MCF 10A (cell line): ENCODE measurements at regions of chr19 and their contacts with region 1.

Region 1: DNA sequence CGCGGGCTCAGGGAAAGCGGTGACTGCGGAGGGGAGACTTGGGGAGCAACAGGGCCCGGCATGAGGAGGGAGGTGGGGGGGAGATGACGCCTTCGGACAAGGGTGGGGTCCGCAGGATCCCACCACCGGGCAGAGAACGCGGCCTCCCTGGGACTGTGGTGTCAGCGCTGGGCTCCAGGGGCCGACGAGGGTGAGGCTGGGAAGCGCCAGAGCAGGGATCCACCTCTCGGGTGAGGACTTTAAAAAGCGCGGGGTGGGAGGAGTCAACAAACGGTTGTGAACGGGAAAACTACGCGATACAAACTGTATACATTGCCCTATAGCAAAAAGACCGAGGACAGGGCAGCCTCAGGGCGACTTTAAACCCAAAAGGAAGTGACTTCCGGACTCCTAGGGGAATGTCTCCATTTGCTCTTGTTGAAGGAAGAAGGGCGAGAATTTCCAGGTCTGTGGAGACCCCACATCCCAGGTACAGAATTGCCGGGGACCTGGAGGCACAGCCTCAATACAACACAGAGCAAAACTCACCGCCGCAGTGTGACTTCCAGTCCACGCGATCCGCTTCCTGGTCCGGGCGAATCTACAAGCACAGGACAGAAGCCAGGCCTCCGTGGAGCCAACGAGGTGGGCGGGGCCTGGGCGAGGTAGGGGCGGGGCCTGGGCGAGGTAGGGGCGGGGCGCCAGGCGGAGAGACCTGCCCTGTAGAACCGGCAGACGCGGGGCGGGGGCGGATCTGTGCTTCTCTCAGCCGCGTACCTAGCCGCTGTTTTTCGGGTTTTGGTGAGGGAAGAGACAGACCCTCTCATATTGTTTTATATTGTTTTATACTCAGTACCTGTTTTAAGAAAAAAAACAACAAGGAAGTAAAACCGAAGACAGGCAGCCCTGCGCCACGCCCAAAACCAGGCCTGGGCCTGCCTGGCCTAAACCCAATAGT is at the start of gene ZNF888:
- DNase-seq: peak; percentile 94
- H3K4me3 Mint-ChIP-seq: peak within 1 kb of the TSS; percentile 92
- H3K27ac Mint-ChIP-seq: peak within 1 kb of the TSS; percentile 83
- H3K4me1 Mint-ChIP-seq: peaks cover 37% of the 10 kb centered on the region
- H3K27me3 Mint-ChIP-seq: no peaks in the 10 kb centered on the region
- CTCF ChIP-seq: no peak
- total RNA-seq, gene ZNF888: 7.0 and 7.3 TPM in 2 replicates

Region 2: GRCh38 chr19:52942386-52943133 is 19.5 kb after region 1 on chr19:
- CTCF ChIA-PET with region 1: interaction called, 3 read pairs
- POLR2A ChIA-PET with region 1: interaction called, 10 read pairs
- intact Hi-C with region 1: loop called (anchors 2 kb)
- DNase-seq: peak; percentile 86
- H3K4me3 Mint-ChIP-seq: peak overlapping the region; percentile 80
- H3K27ac Mint-ChIP-seq: peak overlapping the region; percentile 80
- H3K4me1 Mint-ChIP-seq: peaks cover 11% of the 10 kb centered on the region
- H3K27me3 Mint-ChIP-seq: no peaks in the 10 kb centered on the region
- CTCF ChIP-seq: no peak

Region 3: GRCh38 chr19:52962394-52963246 is 39.5 kb after region 1 on chr19 and contains the start of gene ZNF816:
- CTCF ChIA-PET with region 1: no interaction called
- POLR2A ChIA-PET with region 1: interaction called, 22 read pairs
- intact Hi-C with region 1: loop called (anchors 2 kb)
- DNase-seq: peak; percentile 95
- H3K4me3 Mint-ChIP-seq: peak within 1 kb of the TSS; percentile 95
- H3K27ac Mint-ChIP-seq: peak within 1 kb of the TSS; percentile 87
- H3K4me1 Mint-ChIP-seq: no peaks in the 10 kb centered on the region
- H3K27me3 Mint-ChIP-seq: no peaks in the 10 kb centered on the region
- CTCF ChIP-seq: no peak
- total RNA-seq, gene ZNF816: 5.4 and 5.5 TPM in 2 replicates

Region 4: GRCh38 chr19:52991484-52991883 is 68.4 kb after region 1 on chr19:
- CTCF ChIA-PET with region 1: no interaction called
- POLR2A ChIA-PET with region 1: no interaction called
- intact Hi-C with region 1: loop called (anchors 2 kb)
- DNase-seq: peak; percentile 94
- H3K4me3 Mint-ChIP-seq: peak overlapping the region; percentile 14
- H3K27ac Mint-ChIP-seq: peak overlapping the region; percentile 7
- H3K4me1 Mint-ChIP-seq: peaks cover 9% of the 10 kb centered on the region
- H3K27me3 Mint-ChIP-seq: no peaks in the 10 kb centered on the region
- CTCF ChIP-seq: no peak

Region 5: DNA sequence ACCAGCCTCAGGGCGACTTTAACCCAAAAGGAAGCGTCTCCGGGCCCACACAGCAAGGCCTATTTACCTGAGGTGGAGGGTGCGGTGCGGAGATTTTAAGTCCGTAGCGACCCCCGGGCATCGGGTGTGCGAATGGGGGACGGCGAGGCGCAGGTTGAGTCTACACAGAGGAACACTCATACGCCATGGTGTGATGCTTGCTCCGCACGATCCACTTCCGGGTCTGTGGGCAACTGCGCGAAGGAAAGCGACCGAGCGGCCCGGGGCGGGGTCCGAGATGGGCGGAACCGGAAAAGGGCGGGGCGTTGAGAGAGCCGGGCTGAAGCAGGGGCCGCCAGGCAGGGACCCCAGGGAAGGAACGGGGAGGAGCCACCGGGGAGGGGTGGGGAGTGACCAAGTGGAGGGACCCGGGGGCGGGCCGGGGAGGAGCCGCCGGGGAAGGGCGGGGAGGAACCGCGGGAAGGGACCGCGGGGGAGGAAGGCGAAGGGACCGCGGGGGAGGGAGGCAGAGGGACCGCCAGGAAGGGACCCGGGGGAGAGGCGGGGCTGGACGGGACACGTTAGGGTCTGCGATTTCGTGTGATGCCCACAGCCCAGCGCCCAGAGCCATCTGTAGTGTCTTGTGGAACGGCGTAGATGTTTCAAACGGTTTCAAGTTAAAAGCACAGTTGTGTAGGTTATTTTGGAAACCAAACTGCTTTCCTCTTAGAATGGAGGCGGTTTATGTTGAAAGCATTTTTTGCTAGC is 180.3 kb after region 1 on chr19 and contains the start of gene ZNF160:
- CTCF ChIA-PET with region 1: interaction called, 4 read pairs
- POLR2A ChIA-PET with region 1: interaction called, 10 read pairs
- intact Hi-C with region 1: loop called (anchors 10 kb)
- DNase-seq: peak; percentile 95
- H3K4me3 Mint-ChIP-seq: peak within 1 kb of the TSS; percentile 81
- H3K27ac Mint-ChIP-seq: peak within 1 kb of the TSS; percentile 84
- H3K4me1 Mint-ChIP-seq: peaks cover 13% of the 10 kb centered on the region
- H3K27me3 Mint-ChIP-seq: no peaks in the 10 kb centered on the region
- CTCF ChIP-seq: no peak
- total RNA-seq, gene ZNF160: 16.5 and 20.3 TPM in 2 replicates